OCI-LY7 (cell line): ENCODE measurements at regions of chr16 and their contacts with region 1.

Region 1: DNA sequence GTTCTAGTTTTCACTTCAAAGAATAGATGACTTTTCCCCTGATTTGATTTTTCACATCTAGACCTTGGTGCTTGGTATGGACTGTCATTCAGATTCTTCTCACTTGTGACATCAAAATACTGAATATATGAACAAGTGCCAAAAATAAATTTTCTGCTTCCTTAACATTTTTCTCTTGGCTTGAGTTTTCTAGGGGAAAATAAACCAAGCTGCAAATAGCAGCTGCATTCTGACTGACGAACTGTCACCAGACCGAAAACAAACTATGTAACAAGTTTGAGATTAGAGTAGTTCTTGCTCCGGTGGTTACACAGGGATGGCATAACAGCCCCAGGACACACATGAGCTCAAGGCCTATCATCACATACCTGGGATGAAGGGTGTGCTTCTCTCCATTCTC is 345.7 kb downstream of the CNTNAP4 start:
- DNase-seq: no peak
- H3K4me3 ChIP-seq: no peak overlapping the region
- H3K27ac ChIP-seq: no peak overlapping the region
- H3K4me1 ChIP-seq: no peaks in the 10 kb centered on the region
- CTCF ChIP-seq: no peak

Region 2: DNA sequence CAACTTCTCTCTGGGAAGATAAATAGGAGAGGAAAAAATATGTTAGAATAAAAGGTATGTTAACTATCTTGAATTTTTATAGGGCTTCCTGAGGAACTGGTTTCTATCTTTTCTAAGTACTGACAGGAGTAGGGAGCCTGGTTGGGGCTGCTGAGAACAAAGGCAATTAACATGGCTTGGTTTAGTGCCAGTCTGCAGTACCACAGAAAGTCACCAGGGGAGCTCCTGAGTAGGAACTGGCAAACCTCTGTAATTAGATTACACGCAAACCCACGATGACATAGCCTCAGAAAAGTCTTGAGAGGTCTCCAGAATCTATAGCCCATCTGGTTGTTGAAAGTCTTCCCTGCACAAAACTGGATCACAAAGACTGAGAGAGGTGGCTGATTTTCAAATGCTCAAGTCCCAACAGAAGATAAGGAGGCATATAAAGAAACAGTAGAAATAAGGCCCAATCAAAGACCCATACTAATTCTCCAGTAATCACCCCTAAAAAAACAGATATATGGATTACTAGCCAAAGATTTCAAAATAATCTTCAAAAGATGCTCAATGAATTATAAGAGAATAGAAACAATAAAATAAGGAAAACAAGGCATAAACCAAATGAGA is 357.3 kb before region 1 on chr16:
- CTCF ChIA-PET with region 1: no interaction called
- POLR2A ChIA-PET with region 1: no interaction called
- intact Hi-C with region 1: loop called (anchors 10 kb)
- DNase-seq: peak; percentile 48
- H3K4me3 ChIP-seq: no peak overlapping the region
- H3K27ac ChIP-seq: no peak overlapping the region
- H3K4me1 ChIP-seq: no peaks in the 10 kb centered on the region
- CTCF ChIP-seq: peak; percentile 77